Activated CD8-positive, alpha-beta T cell treated with anti-CD3 and anti-CD28 coated beads, Interleukin-2, amount 10 ng/mL, durations not matched to agents 7 days and 5 days (primary cell): ENCODE measurements at regions of chr11 and their contacts with region 1.

Region 1: GRCh38 chr11:83292709-83293456 is 6.7 kb upstream of the CCDC90B start:
- DNase-seq: peak; percentile 52
- ATAC-seq: peak; percentile 85
- H3K4me3 Mint-ChIP-seq: peak overlapping the region; percentile 48
- H3K27ac Mint-ChIP-seq: no peak overlapping the region
- H3K4me1 Mint-ChIP-seq: peaks cover 7% of the 10 kb centered on the region
- H3K27me3 Mint-ChIP-seq: peaks cover 6% of the 10 kb centered on the region

Region 2: DNA sequence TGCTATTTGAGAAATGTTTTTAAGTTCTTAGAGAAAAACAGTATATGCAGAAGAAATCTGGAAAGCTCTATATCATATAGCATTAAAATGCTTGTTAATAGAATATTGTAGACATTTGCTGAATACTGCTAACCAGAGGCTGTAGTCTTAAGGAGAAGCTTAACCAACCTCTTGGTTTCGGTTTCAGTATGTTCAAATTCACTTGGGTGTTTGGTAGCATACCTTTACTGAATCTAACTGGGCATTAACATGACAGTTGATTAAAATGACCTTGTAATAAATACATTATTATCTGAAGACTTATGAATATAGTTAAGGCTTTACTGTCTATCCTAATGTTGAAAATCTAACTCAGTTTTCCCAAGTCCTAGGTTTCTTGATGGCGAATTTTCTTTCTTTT is 130.5 kb before region 1 on chr11:
- CTCF ChIA-PET with region 1: no interaction called
- POLR2A ChIA-PET with region 1: no interaction called
- DNase-seq: no peak
- ATAC-seq: peak; percentile 66
- H3K4me3 Mint-ChIP-seq: peak overlapping the region; percentile 55
- H3K27ac Mint-ChIP-seq: no peak overlapping the region
- H3K4me1 Mint-ChIP-seq: peaks cover 58% of the 10 kb centered on the region
- H3K27me3 Mint-ChIP-seq: no peaks in the 10 kb centered on the region

Region 3: DNA sequence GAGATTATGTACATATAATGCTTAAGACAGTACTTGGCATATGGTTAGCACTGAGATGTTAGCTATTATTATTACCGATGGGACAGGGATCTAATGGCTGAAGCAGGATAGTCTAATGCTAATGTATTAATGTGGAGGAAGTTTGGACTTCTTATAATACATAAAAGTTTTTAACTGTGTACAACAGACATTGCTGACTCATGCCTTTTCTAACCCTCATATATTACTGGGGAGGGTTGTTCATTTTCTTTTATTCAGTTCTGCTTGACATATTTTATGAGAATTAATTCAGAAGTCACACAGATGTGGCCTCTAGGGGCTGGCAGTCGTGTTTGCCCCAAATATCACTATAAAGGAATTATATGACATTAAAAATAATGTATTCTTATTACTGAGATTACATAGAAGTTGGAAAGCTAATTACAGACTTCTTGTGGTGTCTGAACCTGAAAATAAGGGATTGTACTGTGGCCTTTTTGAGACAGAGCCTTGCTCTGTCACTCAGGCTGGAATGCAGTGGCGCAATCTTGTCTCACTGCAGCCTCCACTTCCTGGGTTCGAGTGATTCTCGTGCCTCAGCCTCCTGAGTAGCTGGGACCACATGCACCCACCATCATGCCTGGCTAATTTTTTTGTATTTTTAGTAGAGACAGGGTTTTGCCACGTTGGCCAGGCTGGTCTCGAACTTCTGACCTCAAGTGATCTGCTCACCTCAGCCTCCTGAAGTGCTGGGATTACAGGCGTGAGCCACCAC is 16.8 kb before region 1 on chr11:
- CTCF ChIA-PET with region 1: interaction called, 36 read pairs
- POLR2A ChIA-PET with region 1: no interaction called
- DNase-seq: no peak
- ATAC-seq: no peak
- H3K4me3 Mint-ChIP-seq: no peak overlapping the region
- H3K27ac Mint-ChIP-seq: no peak overlapping the region
- H3K4me1 Mint-ChIP-seq: no peaks in the 10 kb centered on the region
- H3K27me3 Mint-ChIP-seq: no peaks in the 10 kb centered on the region

Region 4: DNA sequence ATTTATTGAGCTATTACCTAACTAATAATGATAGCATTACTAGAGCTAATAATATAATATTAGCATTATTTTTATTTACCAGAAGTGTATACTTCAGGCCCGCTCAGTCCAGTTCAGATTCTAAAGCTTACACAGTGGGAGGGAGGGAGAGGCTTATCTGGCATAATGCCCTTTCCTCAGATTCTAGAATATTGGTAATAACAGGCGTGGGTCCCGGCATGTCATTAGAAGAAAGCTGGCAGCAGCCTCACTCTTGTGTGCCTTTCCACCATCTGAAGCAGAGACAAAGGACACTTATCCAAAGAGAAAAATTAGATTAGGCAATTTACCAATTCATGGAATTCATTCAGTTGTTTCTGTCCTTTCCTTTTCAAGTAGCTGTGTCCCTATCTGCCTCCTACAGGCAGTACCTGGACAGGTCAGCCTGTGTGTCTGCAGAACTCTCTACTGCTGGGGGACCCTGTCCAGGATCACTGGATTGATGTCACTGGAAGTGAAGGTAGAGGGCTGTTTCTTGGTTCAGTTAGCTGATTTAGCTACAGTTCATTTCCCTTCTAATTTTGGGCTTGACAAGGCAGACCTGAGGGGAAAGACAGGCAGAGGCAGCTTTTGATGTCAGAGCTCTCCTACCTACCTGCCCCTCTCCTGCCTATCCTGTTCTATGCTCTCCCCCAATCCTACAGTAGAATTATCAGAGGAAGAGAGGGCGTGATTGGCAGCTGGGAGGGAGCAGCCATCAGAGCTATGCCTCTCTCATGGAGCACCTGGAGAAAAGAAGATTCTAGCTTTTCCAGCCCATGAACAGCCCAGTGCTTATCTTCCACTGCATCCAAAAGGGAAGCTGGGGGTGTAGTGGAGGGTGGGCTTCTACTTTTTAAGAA is 13.6 kb after region 1 on chr11:
- CTCF ChIA-PET with region 1: interaction called, 16 read pairs
- POLR2A ChIA-PET with region 1: no interaction called
- DNase-seq: no peak
- ATAC-seq: no peak
- H3K4me3 Mint-ChIP-seq: no peak overlapping the region
- H3K27ac Mint-ChIP-seq: no peak overlapping the region
- H3K4me1 Mint-ChIP-seq: no peaks in the 10 kb centered on the region
- H3K27me3 Mint-ChIP-seq: peaks cover 6% of the 10 kb centered on the region

Region 5: GRCh38 chr11:83724008-83724461 is 431.2 kb after region 1 on chr11:
- CTCF ChIA-PET with region 1: interaction called, 12 read pairs
- POLR2A ChIA-PET with region 1: no interaction called
- DNase-seq: peak; percentile 28
- ATAC-seq: peak; percentile 64
- H3K4me3 Mint-ChIP-seq: peak overlapping the region; percentile 8
- H3K27ac Mint-ChIP-seq: no peak overlapping the region
- H3K4me1 Mint-ChIP-seq: no peaks in the 10 kb centered on the region
- H3K27me3 Mint-ChIP-seq: peaks cover 25% of the 10 kb centered on the region

Region 6: DNA sequence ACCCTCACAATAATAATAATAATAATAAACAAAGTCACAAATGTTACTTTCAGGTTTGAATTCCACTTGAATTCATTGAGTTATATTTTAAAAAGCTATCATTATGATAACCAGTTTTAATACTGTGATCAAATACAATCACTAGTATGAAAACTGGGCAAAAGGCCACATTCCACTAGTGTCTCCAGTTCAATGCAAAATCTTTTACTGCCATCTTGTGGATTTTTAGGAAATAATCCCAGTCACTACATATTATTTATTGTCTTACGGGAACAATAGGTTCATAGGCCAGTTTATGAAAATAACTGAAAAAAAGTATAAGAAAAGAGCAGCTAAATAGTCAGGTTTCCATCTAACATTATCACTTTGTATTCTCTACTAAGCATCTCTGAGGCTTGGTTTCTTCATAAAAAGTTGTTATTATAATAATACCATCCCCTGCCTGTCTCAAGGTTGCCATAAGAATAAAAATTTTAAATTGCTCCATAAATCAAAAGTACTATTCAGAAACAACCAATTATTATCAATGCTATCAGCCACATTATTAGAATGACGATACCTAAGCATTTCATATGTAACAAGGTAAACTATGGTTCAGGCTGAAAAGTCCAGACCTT is 527.2 kb after region 1 on chr11:
- CTCF ChIA-PET with region 1: interaction called, 24 read pairs
- POLR2A ChIA-PET with region 1: no interaction called
- DNase-seq: no peak
- ATAC-seq: no peak
- H3K4me3 Mint-ChIP-seq: no peak overlapping the region
- H3K27ac Mint-ChIP-seq: no peak overlapping the region
- H3K4me1 Mint-ChIP-seq: no peaks in the 10 kb centered on the region
- H3K27me3 Mint-ChIP-seq: peaks cover 4% of the 10 kb centered on the region